ENCODE measurements at regions of chr12 and their contacts with region 1.

Region 1: GRCh38 chr12:120495723-120496412 is at the start of gene DYNLL1:
- DNase-seq: peak; percentile 94
- H3K4me3 ChIP-seq: peak within 1 kb of the TSS; percentile 73 to 81 (median 74)
- H3K27ac ChIP-seq: peak within 1 kb of the TSS; percentile 80
- H3K4me1 ChIP-seq: peaks cover 14% of the 10 kb centered on the region
- H3K27me3 ChIP-seq: no peaks in the 10 kb centered on the region
- CTCF ChIP-seq: no peak
- total RNA-seq, gene DYNLL1: 210 to 390 TPM

Region 2: GRCh38 chr12:120453977-120454376 is 41.9 kb before region 1 on chr12:
- CTCF ChIA-PET with region 1: no interaction called
- dilution Hi-C with region 1: no loop called
- in situ Hi-C with region 1: no loop called
- intact Hi-C with region 1: loop called (anchors 5 kb)
- DNase-seq: peak; percentile 18
- H3K4me3 ChIP-seq: no peak overlapping the region
- H3K27ac ChIP-seq: no peak overlapping the region
- H3K4me1 ChIP-seq: no peaks in the 10 kb centered on the region
- H3K27me3 ChIP-seq: no peaks in the 10 kb centered on the region
- CTCF ChIP-seq: peak; percentile 71 to 82

Region 3: GRCh38 chr12:120469450-120470149 is 26.3 kb before region 1 on chr12 and contains the start of gene SRSF9:
- CTCF ChIA-PET with region 1: interaction called, 3 read pairs
- dilution Hi-C with region 1: no loop called
- in situ Hi-C with region 1: no loop called
- intact Hi-C with region 1: loop called (anchors 1 kb)
- DNase-seq: peak; percentile 91
- H3K4me3 ChIP-seq: peak within 1 kb of the TSS; percentile 79 to 92 (median 79)
- H3K27ac ChIP-seq: peak within 1 kb of the TSS; percentile 64
- H3K4me1 ChIP-seq: peaks cover 16% of the 10 kb centered on the region
- H3K27me3 ChIP-seq: no peaks in the 10 kb centered on the region
- CTCF ChIP-seq: peak; percentile 62 to 93
- total RNA-seq, gene SRSF9: 84.7 to 205 TPM

Region 4: GRCh38 chr12:120528861-120529525 is 33.1 kb after region 1 on chr12 and contains the start of gene COQ5:
- CTCF ChIA-PET with region 1: no interaction called
- dilution Hi-C with region 1: no loop called
- in situ Hi-C with region 1: no loop called
- intact Hi-C with region 1: loop called (anchors 2 kb)
- DNase-seq: peak; percentile 83
- H3K4me3 ChIP-seq: peak within 1 kb of the TSS; percentile 80 to 88 (median 86)
- H3K27ac ChIP-seq: peak within 1 kb of the TSS; percentile 84
- H3K4me1 ChIP-seq: peaks cover 18% of the 10 kb centered on the region
- H3K27me3 ChIP-seq: no peaks in the 10 kb centered on the region
- CTCF ChIP-seq: no peak
- total RNA-seq, gene COQ5: 12.0 to 21.1 TPM

Measured in mammary epithelial cell (primary cell).